Caco-2 (cell line): ENCODE measurements at regions of chr10 and their contacts with region 1.

Region 1: DNA sequence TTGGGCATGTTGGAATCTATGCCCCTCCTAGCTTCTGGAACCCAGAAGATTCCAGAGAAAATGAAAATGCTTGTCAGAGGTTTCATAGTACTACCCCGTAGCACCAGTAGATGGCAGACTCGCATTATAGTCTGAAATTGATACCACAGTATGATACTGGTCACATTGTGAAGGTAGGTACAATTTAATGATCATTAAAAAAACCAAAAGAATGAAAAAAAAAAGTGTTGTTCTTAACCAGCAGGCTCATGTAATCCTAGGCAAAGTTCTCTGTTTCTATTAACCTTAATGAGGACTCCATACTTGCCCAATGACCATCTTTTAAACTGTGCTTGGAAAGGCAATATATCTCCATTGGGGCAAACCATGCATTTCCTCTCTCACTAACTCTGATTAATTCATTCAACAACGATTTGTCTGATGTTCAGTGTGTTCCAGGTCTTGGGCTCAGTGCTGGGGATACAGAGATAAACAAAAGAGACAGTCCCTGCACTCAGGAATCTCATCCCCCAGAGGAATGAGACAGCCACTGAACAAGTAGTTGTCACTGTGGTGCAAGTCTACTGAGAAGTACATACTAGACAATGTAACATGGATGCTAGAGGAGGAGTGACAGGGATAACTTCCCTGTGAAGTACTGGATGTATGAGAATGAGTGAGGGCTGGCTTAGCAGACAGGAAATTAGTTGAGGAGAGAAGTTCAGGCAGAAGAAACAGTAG is 223.5 kb upstream of the PHYHIPL start:
- DNase-seq: peak; percentile 67 to 84
- H3K4me3 ChIP-seq: no peak overlapping the region
- H3K4me3 Mint-ChIP-seq: no peak overlapping the region
- H3K27ac Mint-ChIP-seq: peak overlapping the region; percentile 24
- H3K4me1 ChIP-seq: peaks cover 22% of the 10 kb centered on the region
- H3K4me1 Mint-ChIP-seq: peaks cover 23% of the 10 kb centered on the region
- H3K27me3 ChIP-seq: no peaks in the 10 kb centered on the region
- H3K27me3 Mint-ChIP-seq: no peaks in the 10 kb centered on the region
- CTCF ChIP-seq: peak; percentile 92 to 97

Region 2: GRCh38 chr10:58781873-58782488 is 170.9 kb before region 1 on chr10:
- CTCF ChIA-PET with region 1: interaction called, 3 read pairs
- POLR2A ChIA-PET with region 1: no interaction called
- intact Hi-C with region 1: loop called (anchors 1 kb)
- DNase-seq: peak in 1 of 2 experiments; percentile 78
- H3K4me3 ChIP-seq: no peak overlapping the region
- H3K4me3 Mint-ChIP-seq: no peak overlapping the region
- H3K27ac Mint-ChIP-seq: peak overlapping the region; percentile 60
- H3K4me1 ChIP-seq: peaks cover 31% of the 10 kb centered on the region
- H3K4me1 Mint-ChIP-seq: peaks cover 38% of the 10 kb centered on the region
- H3K27me3 ChIP-seq: no peaks in the 10 kb centered on the region
- H3K27me3 Mint-ChIP-seq: no peaks in the 10 kb centered on the region
- CTCF ChIP-seq: peak; percentile 71 to 83

Region 3: DNA sequence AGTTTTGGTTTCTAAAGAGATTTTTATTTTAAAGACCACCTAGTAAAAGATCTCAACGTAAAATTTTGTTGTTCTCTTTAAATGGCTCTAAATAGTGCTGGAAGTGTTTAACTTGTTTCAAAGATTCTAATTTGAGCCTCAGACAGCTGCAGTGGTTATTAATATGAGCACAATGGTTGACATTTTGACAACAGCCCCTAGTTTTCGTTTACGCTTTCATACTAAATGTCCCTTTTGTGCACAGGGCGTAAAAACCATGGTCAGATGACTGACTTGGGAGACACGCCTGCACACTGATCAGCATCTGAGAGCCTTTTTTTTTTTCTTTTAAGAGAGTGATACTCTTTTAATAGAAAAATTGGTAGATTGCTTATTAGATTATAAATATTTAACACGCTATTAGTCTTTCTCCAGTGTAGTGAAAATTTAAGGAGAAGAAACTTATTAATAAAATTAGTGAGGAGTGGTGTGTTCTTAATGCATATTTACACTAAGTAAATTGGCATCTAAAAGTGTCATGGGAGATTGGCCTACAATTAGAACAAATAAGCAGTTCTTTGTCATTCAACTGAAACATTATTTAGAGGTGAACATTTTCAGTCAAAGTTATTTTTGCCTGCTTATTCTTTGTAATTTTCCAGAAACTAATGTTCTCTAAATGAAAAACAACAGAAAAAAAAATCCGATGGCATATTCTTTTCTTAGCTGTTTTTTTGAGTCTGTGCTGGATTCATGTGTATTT is 40.7 kb after region 1 on chr10:
- CTCF ChIA-PET with region 1: no interaction called
- POLR2A ChIA-PET with region 1: no interaction called
- intact Hi-C with region 1: loop called (anchors 2 kb)
- DNase-seq: no peak
- H3K4me3 ChIP-seq: no peak overlapping the region
- H3K4me3 Mint-ChIP-seq: peak overlapping the region; percentile 54
- H3K27ac Mint-ChIP-seq: peak overlapping the region; percentile 32
- H3K4me1 ChIP-seq: peaks cover 49% of the 10 kb centered on the region
- H3K4me1 Mint-ChIP-seq: peaks cover 38% of the 10 kb centered on the region
- H3K27me3 ChIP-seq: no peaks in the 10 kb centered on the region
- H3K27me3 Mint-ChIP-seq: no peaks in the 10 kb centered on the region
- CTCF ChIP-seq: no peak

Region 4: DNA sequence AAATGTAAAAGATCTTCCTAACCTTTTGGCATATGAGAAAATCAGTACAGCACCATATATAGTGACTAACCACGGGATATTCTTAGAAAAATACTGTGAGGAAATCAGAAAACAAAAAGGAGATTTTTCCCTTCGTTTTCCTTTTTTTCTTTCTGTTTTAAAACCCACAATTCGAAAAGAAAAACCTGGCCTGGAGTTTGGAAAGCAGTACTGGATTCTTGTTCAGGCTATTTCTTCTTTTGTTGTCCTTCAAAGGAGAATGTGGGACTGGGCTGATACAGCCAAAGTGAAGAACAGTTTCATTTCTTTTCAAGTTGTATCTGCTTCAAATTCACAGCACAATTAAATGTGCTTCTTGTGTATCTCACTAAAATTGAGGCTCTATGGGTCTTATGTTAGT is 66.7 kb after region 1 on chr10:
- CTCF ChIA-PET with region 1: no interaction called
- POLR2A ChIA-PET with region 1: no interaction called
- intact Hi-C with region 1: no loop called
- DNase-seq: no peak
- H3K4me3 ChIP-seq: no peak overlapping the region
- H3K4me3 Mint-ChIP-seq: no peak overlapping the region
- H3K27ac Mint-ChIP-seq: no peak overlapping the region
- H3K4me1 ChIP-seq: 0 out of 2 replicates have a peak, but pooled peaks cover 9% of the 10 kb centered on the region
- H3K4me1 Mint-ChIP-seq: peaks cover 5% of the 10 kb centered on the region
- H3K27me3 ChIP-seq: no peaks in the 10 kb centered on the region
- H3K27me3 Mint-ChIP-seq: no peaks in the 10 kb centered on the region
- CTCF ChIP-seq: no peak

Region 5: GRCh38 chr10:59176167-59177030 is 223.5 kb after region 1 on chr10 and contains the start of gene PHYHIPL:
- CTCF ChIA-PET with region 1: interaction called, 6 read pairs
- POLR2A ChIA-PET with region 1: interaction called, 3 read pairs
- intact Hi-C with region 1: loop called (anchors 1 kb)
- DNase-seq: peak; percentile 77 to 84
- H3K4me3 ChIP-seq: peak within 1 kb of the TSS; percentile 97
- H3K4me3 Mint-ChIP-seq: peak within 1 kb of the TSS; percentile 90
- H3K27ac Mint-ChIP-seq: peak within 1 kb of the TSS; percentile 60
- H3K4me1 ChIP-seq: peaks cover 39% of the 10 kb centered on the region
- H3K4me1 Mint-ChIP-seq: peaks cover 25% of the 10 kb centered on the region
- H3K27me3 ChIP-seq: no peaks in the 10 kb centered on the region
- H3K27me3 Mint-ChIP-seq: no peaks in the 10 kb centered on the region
- CTCF ChIP-seq: no peak
- total RNA-seq, gene PHYHIPL: 48.1 and 50.2 TPM in 2 replicates

Region 6: DNA sequence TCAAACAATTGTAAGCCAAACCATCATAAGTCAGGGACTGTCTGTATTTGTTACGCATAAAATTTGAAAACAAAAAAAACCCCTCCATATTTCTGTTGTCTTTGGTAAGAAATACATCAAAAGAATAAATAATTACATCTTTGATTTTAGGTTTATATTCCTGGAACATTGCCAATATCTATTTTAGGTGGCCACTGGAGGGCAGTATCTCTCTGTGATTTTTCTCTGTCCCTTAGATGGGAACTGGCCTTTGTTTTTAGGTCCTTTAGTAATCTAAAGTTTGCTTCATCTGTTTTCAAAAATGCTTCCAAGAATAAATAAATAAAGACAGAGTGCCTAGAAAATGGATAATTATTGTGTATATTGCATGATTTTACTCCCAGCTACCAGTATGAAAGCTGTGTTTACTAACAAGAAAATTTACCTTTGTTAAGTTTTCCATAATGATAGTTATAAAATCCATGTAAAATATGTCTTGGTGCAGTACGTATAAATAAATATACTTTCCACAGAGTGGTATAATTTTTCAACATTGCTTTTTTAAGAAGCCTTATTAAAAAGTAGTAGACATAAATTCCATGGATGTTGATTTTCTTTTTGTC is 287.8 kb after region 1 on chr10:
- CTCF ChIA-PET with region 1: no interaction called
- POLR2A ChIA-PET with region 1: no interaction called
- intact Hi-C with region 1: loop called (anchors 1 kb)
- DNase-seq: peak in 1 of 2 experiments; percentile 69
- H3K4me3 ChIP-seq: no peak overlapping the region
- H3K4me3 Mint-ChIP-seq: no peak overlapping the region
- H3K27ac Mint-ChIP-seq: no peak overlapping the region
- H3K4me1 ChIP-seq: no peaks in the 10 kb centered on the region
- H3K4me1 Mint-ChIP-seq: peaks cover 13% of the 10 kb centered on the region
- H3K27me3 ChIP-seq: no peaks in the 10 kb centered on the region
- H3K27me3 Mint-ChIP-seq: no peaks in the 10 kb centered on the region
- CTCF ChIP-seq: peak; percentile 82 to 89

Region 7: GRCh38 chr10:59265141-59265540 is 312.2 kb after region 1 on chr10:
- CTCF ChIA-PET with region 1: no interaction called
- POLR2A ChIA-PET with region 1: no interaction called
- intact Hi-C with region 1: no loop called
- DNase-seq: no peak
- H3K4me3 ChIP-seq: no peak overlapping the region
- H3K4me3 Mint-ChIP-seq: no peak overlapping the region
- H3K27ac Mint-ChIP-seq: no peak overlapping the region
- H3K4me1 ChIP-seq: no peaks in the 10 kb centered on the region
- H3K4me1 Mint-ChIP-seq: no peaks in the 10 kb centered on the region
- H3K27me3 ChIP-seq: no peaks in the 10 kb centered on the region; the same call in 1 of the 2 replicates
- H3K27me3 Mint-ChIP-seq: peaks cover 7% of the 10 kb centered on the region
- CTCF ChIP-seq: no peak

Region 8: DNA sequence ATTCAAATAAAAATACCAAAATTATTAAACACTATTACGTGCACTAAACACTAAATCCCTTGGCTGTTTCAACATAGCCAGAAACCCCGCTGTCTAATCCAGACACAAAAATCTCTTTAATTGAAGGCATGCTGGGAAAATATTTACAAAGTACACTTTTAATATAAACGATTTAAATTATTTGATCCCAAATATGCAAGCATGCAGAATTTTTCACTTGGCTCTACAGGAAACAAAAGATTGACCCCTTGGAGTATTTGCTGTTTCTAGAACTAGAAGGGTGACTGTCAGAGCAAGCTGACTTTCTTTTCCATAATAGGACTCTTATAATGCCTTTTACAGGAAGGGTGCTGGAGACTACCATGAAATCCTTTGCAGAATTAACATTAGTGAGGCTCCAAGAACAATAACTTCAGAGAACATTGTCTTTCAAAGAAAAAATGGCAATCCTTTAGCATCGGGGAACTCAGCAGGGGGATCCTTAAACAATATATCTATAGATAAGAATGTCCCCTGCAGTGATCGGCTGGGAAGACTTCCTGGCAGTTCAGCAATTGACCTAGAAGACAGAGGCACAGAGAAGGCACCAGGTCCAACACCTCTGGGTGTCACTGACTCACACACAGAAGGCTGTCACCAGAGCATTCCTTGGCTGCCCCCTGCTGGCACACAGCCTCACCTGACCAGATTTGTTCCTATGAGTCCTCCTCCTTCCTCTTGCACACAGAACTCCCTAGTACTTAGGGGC is 856.2 kb after region 1 on chr10:
- CTCF ChIA-PET with region 1: no interaction called
- POLR2A ChIA-PET with region 1: no interaction called
- intact Hi-C with region 1: loop called (anchors 5 kb)
- DNase-seq: peak; percentile 84 to 90
- H3K4me3 ChIP-seq: no peak overlapping the region
- H3K4me3 Mint-ChIP-seq: no peak overlapping the region
- H3K27ac Mint-ChIP-seq: no peak overlapping the region
- H3K4me1 ChIP-seq: no peaks in the 10 kb centered on the region
- H3K4me1 Mint-ChIP-seq: no peaks in the 10 kb centered on the region
- H3K27me3 ChIP-seq: no peaks in the 10 kb centered on the region
- H3K27me3 Mint-ChIP-seq: no peaks in the 10 kb centered on the region
- CTCF ChIP-seq: peak; percentile 87 to 92